GM10248 (cell line): ENCODE measurements at regions of chr11 and their contacts with region 1.

Region 1: GRCh38 chr11:64688534-64688982 is 34.4 kb downstream of the NRXN2 start:
- DNase-seq: peak; percentile 92
- CTCF ChIP-seq: peak; percentile 82

Region 2: DNA sequence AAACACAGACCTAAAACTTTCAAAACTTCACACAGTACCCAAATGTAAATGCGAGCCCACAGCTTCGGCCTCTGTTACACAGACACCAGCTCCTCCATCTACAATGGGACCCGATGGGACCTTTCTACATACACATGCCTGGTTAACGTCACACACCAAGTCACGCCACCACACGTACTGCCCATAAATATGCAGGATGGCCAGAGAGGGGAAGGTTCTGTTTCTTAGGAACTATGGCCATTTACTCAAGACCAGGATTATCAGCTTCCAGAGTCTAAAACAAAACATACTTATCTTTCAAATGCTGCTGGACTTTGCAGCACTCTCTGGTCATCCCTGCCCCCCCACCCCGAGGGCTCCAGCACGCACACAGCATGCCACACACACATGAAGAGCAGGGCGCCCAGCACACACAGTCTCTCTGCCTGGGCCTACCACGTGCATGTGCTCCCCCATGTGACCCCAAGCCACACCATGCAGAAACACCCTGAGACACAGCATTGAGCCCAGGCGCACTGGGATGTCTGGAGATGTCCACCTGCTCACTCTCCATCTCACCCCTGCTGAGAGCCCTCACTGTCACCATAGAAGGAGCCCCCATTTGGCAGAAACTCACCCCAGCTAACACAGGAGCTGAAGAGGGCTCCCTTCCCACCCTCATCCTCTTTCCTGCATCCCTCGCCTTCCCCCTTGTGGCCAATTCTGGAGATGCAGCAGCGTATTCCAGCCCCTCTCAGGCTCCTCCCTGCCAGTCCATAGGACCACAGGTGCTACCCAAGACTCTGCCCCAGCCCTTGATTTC is 35.8 kb before region 1 on chr11:
- CTCF ChIA-PET with region 1: interaction called, 18 read pairs
- POLR2A ChIA-PET with region 1: no interaction called
- DNase-seq: peak; percentile 85
- CTCF ChIP-seq: peak; percentile 89

Region 3: GRCh38 chr11:64703048-64703447 is 14.5 kb after region 1 on chr11:
- CTCF ChIA-PET with region 1: interaction called, 22 read pairs
- POLR2A ChIA-PET with region 1: interaction called, 5 read pairs
- DNase-seq: no peak
- CTCF ChIP-seq: no peak

Region 4: GRCh38 chr11:64723117-64723906 is 34.8 kb after region 1 on chr11 and contains the start of gene NRXN2:
- CTCF ChIA-PET with region 1: interaction called, 30 read pairs
- POLR2A ChIA-PET with region 1: no interaction called
- DNase-seq: peak; percentile 96
- CTCF ChIP-seq: peak; percentile 86

Region 5: GRCh38 chr11:64742889-64743590 is 54.5 kb after region 1 on chr11:
- CTCF ChIA-PET with region 1: interaction called, 50 read pairs
- POLR2A ChIA-PET with region 1: no interaction called
- DNase-seq: peak; percentile 92
- CTCF ChIP-seq: peak; percentile 74